Caco-2 (cell line): ENCODE measurements at regions of chr11 and their contacts with region 1.

Region 1: GRCh38 chr11:64916775-64917662 is at the start of gene ATG2A:
- DNase-seq: peak; percentile 99
- H3K4me3 ChIP-seq: peak within 1 kb of the TSS; percentile 93
- H3K4me3 Mint-ChIP-seq: peak within 1 kb of the TSS; percentile 91
- H3K27ac Mint-ChIP-seq: peak within 1 kb of the TSS; percentile 74
- H3K4me1 ChIP-seq: peaks cover 6% of the 10 kb centered on the region
- H3K4me1 Mint-ChIP-seq: no peaks in the 10 kb centered on the region
- H3K27me3 ChIP-seq: no peaks in the 10 kb centered on the region
- H3K27me3 Mint-ChIP-seq: no peaks in the 10 kb centered on the region
- CTCF ChIP-seq: no peak
- total RNA-seq, gene ATG2A: 27.9 and 31.1 TPM in 2 replicates

Region 2: DNA sequence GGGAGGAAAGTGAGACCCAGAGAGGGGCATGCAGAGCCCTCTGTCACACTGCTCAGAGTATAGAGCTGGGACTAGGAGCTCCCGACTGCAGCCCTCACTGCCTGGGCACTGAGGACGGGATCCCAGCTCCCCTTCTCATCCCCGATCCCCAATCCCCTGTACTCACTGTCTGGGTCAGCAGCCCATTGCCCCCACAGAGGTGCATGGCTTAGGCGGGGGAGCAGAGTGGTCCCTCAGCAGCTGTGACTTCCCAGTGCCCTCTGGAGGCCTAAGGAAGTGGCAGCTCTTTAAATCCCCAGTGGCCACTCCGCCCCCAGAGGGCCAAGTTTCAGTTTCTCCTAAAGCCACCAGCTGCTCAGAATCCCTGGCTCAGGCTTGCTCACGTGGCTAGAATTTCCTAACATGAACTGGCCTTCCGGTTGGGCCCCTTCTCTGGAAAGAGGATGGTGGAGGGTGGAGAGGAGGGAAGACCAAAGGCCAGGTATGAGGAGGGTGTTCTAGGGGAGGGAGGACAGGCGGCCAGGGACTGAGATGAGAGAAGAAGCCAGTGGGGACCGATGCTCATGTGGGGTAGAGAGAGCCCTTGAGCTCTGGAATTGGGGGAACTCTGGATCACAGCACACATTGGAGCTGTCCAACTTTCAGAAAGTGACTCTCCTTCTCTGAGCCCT is 79.8 kb after region 1 on chr11 and contains the start of gene BATF2:
- CTCF ChIA-PET with region 1: interaction called, 4 read pairs
- POLR2A ChIA-PET with region 1: no interaction called
- intact Hi-C with region 1: loop called (anchors 2 kb)
- DNase-seq: peak; percentile 79 to 84
- H3K4me3 ChIP-seq: no peak within 1 kb of the TSS
- H3K4me3 Mint-ChIP-seq: peak within 1 kb of the TSS; percentile 56
- H3K27ac Mint-ChIP-seq: peak within 1 kb of the TSS; percentile 63
- H3K4me1 ChIP-seq: peaks cover 37% of the 10 kb centered on the region
- H3K4me1 Mint-ChIP-seq: peaks cover 26% of the 10 kb centered on the region
- H3K27me3 ChIP-seq: no peaks in the 10 kb centered on the region
- H3K27me3 Mint-ChIP-seq: no peaks in the 10 kb centered on the region
- CTCF ChIP-seq: peak; percentile 45 to 69
- total RNA-seq, gene BATF2: 0.79 and 1.4 TPM in 2 replicates